Activated CD4-positive, alpha-beta memory T cell treated with anti-CD3 and anti-CD28 coated beads for 36 hours (primary cell): ENCODE measurements at regions of chr12 and their contacts with region 1.

Region 1: GRCh38 chr12:112382232-112382796 is at the start of gene HECTD4:
- DNase-seq: peak; percentile 95
- H3K4me3 Mint-ChIP-seq: peak within 1 kb of the TSS; percentile 91
- H3K27ac Mint-ChIP-seq: peak within 1 kb of the TSS; percentile 75
- H3K4me1 Mint-ChIP-seq: peaks cover 31% of the 10 kb centered on the region
- H3K27me3 Mint-ChIP-seq: no peaks in the 10 kb centered on the region
- total RNA-seq, gene HECTD4: 24.0 to 24.4 TPM

Region 2: DNA sequence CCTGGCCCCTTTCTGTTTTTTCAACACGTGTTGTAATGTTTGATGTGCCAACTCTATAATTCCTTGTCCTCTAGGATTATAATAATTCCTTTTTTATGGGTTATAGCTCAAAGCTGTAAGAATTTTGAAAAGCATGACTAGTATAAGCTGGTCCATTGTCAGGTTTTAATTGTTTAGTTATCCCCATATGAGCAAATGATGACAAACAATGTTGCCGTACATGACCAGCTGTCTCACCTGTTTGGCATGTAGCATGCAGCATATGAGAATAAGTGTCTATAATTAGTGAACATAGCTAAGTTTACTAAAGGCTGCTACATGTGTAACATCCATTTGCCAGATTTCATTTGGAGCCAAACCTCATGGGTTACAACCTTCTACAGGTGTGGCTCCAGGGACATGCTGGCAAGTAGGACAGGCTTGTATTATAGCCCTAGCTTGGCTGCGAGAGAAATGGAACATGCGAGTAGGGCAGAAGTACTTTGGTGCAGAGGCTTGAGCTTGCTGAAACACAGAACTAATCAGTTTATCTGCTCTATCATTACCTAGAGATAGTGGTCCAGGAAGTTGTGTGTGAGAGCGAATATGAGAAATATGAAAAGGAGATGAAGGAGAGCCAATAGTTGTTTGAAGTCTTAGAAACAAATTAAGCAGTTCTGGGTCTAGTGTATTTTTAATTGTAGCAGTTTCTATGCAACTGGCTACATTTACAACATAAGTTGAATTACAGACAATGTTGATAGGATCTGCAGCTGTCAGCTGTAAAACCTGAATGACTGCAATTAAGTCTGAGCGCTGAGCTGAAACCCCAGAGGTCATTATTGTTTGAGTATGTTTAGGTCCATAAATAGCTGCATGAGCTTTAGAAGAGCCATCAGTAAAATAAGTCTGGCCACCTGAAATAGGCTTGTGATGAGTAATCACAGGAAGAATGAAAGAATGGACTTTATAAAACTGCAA is 562.8 kb before region 1 on chr12:
- CTCF ChIA-PET with region 1: no interaction called
- POLR2A ChIA-PET with region 1: no interaction called
- intact Hi-C with region 1: loop called (anchors 5 kb)
- DNase-seq: no peak
- H3K4me3 Mint-ChIP-seq: no peak overlapping the region
- H3K27ac Mint-ChIP-seq: no peak overlapping the region
- H3K4me1 Mint-ChIP-seq: no peaks in the 10 kb centered on the region
- H3K27me3 Mint-ChIP-seq: peaks cover 6% of the 10 kb centered on the region

Region 3: GRCh38 chr12:111942557-111942956 is 439.8 kb before region 1 on chr12:
- CTCF ChIA-PET with region 1: interaction called, 10 read pairs
- POLR2A ChIA-PET with region 1: no interaction called
- intact Hi-C with region 1: loop called (anchors 1 kb)
- DNase-seq: no peak
- H3K4me3 Mint-ChIP-seq: no peak overlapping the region
- H3K27ac Mint-ChIP-seq: peak overlapping the region; percentile 64
- H3K4me1 Mint-ChIP-seq: peaks cover 22% of the 10 kb centered on the region
- H3K27me3 Mint-ChIP-seq: no peaks in the 10 kb centered on the region

Region 4: DNA sequence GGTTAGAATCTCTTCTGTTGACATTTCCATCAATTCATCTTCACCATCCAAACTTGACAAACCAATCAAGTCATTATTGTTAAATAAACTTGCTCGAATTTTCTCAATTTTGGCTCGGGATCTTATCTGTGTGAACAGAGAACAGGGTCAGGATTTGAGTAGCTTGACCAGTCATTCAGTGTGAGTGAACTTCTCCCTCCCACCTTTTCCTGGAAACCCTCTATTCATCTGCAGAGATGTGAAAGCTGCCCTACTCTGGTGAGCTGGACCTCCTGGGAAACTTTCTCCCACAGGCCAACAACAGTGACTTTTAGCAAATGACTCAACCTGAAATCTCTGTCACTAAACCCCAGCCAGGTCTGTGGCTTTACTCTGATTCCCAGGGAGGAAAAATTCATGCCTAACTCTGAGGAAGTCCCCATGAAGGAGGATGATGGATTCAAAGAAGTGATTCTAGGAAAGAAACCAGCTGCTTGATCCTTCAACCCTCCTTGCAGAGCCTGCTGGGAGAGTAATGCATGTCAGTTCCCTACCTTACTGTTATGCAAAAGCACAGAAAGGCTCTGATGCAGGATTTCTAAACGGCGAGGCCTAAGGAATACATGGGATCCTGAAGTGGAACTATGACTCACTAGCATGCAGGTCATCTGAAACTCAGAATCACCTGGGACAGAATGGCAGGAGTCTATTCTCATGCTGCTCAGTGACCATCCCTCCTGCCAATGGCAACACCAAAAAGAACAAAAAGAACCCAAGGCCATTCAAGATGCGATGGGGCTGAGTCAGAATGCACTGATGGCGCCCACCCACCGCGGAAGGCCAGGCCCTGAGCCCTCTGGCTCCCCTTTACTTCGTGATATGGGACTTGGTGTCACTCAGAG is 198.9 kb before region 1 on chr12:
- CTCF ChIA-PET with region 1: no interaction called
- POLR2A ChIA-PET with region 1: no interaction called
- intact Hi-C with region 1: loop called (anchors 1 kb)
- DNase-seq: peak; percentile 69
- H3K4me3 Mint-ChIP-seq: no peak overlapping the region
- H3K27ac Mint-ChIP-seq: peak overlapping the region; percentile 46
- H3K4me1 Mint-ChIP-seq: peaks cover 20% of the 10 kb centered on the region
- H3K27me3 Mint-ChIP-seq: no peaks in the 10 kb centered on the region

Region 5: GRCh38 chr12:112303004-112303403 is 79.3 kb before region 1 on chr12:
- CTCF ChIA-PET with region 1: interaction called, 3 read pairs
- POLR2A ChIA-PET with region 1: no interaction called
- intact Hi-C with region 1: loop called (anchors 2 kb)
- DNase-seq: peak; percentile 77
- H3K4me3 Mint-ChIP-seq: no peak overlapping the region
- H3K27ac Mint-ChIP-seq: peak overlapping the region; percentile 82
- H3K4me1 Mint-ChIP-seq: peaks cover 8% of the 10 kb centered on the region
- H3K27me3 Mint-ChIP-seq: no peaks in the 10 kb centered on the region

Region 6: GRCh38 chr12:112362310-112362709 is 20.0 kb before region 1 on chr12:
- CTCF ChIA-PET with region 1: no interaction called
- POLR2A ChIA-PET with region 1: no interaction called
- intact Hi-C with region 1: no loop called
- DNase-seq: no peak
- H3K4me3 Mint-ChIP-seq: no peak overlapping the region
- H3K27ac Mint-ChIP-seq: no peak overlapping the region
- H3K4me1 Mint-ChIP-seq: no peaks in the 10 kb centered on the region
- H3K27me3 Mint-ChIP-seq: no peaks in the 10 kb centered on the region